Breast epithelium (tissue), 4 donors: ENCODE measurements at regions of chr11 and their contacts with region 1.

Region 1: GRCh38 chr11:1449490-1450243 is 36.9 kb downstream of the MOB2 start:
- DNase-seq: no peak
- H3K4me3 ChIP-seq: no peak overlapping the region
- H3K27ac ChIP-seq: no peak overlapping the region
- H3K4me1 ChIP-seq: peaks cover 0 to 8% of the 10 kb centered on the region in 2 donors
- H3K27me3 ChIP-seq: peaks cover 0 to 61% of the 10 kb centered on the region in 2 donors
- CTCF ChIP-seq: no peak
- POLR2A ChIP-seq: no peak

Region 2: DNA sequence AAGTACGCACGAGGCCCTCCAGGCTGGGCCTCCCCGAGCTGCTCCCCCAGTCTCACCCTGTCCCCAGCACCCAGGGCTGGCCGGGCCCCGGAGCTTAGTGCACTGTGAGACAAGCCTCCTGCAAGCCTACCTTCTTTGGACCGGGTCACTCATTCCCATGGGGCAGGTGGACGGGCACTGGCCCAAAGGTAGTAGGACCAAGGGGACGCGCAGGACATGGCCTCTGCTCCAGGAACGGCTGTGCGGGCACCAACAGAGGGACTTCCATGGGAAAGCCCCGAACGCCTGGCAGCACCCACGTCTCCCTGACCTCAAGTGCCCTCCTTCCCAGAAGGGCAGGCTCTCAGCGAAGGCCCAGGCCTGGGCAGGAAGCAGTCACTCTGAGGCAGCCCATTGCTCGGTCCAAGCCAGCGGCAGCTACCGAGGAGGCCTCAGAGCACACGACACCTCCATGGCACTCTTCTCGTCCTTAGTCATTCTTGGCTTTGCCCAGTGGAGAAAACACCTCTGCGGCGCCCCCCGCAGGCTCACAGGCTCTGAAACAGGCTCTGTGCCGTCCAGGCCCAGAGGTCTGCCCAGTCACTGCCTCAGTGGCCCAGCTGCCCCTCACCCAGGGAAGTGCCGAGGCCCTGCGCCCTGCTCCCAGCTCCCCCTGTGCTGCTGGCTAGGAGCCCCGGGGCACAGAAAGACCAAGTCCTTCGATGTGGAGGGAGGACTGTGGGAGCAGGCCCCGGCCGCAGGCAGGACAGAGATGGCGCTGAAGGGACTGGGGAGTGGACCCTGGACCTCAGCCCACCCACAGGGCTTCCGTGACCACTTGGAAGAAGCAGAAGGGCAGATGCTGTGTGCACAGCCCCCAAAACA is 33.1 kb after region 1 on chr11:
- intact Hi-C with region 1: loop called (anchors 1 kb)
- DNase-seq: no peak
- H3K4me3 ChIP-seq: no peak overlapping the region
- H3K27ac ChIP-seq: peak overlapping the region in 1 of 2 donors; percentile 79
- H3K4me1 ChIP-seq: peaks cover 11 to 18% of the 10 kb centered on the region in 2 donors
- H3K27me3 ChIP-seq: no peaks in the 10 kb centered on the region
- CTCF ChIP-seq: no peak
- POLR2A ChIP-seq: no peak

Region 3: DNA sequence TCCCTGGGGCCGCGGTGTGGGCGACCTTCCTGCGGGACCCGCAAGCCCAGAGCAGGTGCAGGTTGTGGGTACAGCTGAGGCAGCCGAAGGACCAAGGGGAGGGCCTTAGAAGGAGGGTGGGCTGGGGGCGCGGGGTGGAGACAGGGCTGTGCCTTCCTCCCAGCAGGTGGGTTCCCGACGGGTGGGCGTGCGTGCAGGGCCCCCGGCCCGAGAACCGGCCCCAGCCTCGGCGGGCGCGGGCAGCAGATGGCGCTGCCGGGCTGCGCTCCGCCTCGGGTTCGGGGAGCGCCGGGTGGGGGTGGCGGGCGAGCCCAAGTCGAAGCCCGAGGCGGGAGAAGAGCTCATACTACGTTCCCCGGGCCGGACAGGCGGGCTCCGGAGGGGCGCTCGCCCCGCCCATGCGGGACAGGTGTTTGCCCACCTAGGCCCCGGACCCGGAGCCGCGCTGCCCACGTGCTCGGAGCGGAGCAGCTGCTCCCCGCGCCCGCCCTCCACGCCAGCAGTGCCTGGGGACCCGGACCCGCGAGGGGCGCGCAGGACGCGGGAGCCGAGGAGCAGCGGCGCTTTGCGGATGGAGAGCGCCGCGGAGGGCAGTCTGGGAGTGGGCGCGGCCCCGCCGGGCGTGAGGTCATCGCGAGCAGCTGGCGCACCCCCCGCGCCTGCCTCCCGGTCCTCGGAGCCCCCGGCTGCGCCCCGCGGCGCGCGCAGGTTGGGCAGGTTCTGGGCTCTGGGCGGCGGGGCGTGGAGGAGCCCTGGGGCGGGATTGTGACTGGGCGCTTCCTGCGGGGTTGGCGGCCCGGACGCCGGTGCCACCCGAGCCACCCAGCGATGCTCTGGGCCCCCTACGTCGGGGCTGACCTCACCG is 97.1 kb after region 1 on chr11:
- intact Hi-C with region 1: no loop called
- DNase-seq: no peak
- H3K4me3 ChIP-seq: peak overlapping the region; percentile 18 to 63 (median 44)
- H3K27ac ChIP-seq: peak overlapping the region in 1 of 2 donors; percentile 73
- H3K4me1 ChIP-seq: peaks cover 0 to 6% of the 10 kb centered on the region in 2 donors
- H3K27me3 ChIP-seq: peaks cover 3 to 23% of the 10 kb centered on the region in 2 donors
- CTCF ChIP-seq: peak in 2 of 3 donors; percentile 50 to 55
- POLR2A ChIP-seq: no peak

Region 4: DNA sequence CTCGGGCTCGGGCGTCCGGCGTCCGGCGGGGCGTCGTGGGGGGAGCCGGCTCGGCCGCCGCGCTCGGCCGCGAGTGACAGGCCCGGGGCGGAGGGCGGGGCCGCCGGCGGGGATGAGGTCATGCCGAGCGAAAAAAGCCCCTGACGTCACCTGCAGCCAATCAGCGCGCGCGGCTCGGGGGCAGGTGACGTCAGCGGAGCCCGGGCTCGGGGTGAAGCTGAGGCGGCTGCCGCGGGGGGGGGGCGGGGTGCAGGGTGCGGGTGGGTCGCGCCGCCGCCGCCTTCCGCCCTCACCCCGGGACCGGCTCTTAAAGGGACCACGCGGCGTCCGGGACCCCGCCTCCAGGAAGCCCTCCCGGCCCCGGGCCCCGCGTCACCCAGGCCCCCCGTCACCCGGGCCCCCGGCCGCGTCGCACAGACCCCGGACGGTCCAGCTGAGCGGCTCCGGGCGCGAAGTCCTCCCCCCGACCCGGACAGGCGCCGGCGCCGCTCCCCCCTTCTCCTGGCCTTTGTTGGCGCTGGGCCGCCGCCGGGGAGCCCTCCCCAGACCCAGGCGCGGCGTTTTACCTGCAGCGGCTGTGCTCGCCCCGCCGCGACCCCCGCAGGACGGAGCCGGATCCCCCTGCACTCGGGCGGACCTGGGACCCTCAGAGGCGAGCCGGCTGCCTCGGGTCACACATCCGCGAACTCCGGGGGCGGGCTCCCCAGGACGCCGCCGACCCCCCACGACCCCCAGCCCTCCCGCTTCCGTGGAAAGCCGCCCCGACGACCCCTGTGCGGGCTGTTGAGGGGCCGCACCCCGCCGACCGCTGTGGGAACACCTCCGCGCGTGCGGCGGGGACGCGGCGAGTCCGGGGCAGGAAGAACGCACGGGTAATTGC is 122.8 kb after region 1 on chr11 and contains the start of gene DUSP8:
- intact Hi-C with region 1: no loop called
- DNase-seq: peak; percentile 84 to 89
- H3K4me3 ChIP-seq: peak within 1 kb of the TSS; percentile 50 to 77 (median 61)
- H3K27ac ChIP-seq: peak within 1 kb of the TSS; percentile 75 to 92
- H3K4me1 ChIP-seq: peaks cover 0 to 7% of the 10 kb centered on the region in 2 donors
- H3K27me3 ChIP-seq: peaks cover 0 to 15% of the 10 kb centered on the region in 2 donors
- CTCF ChIP-seq: no peak
- POLR2A ChIP-seq: no peak
- total RNA-seq, gene DUSP8: 0.80 to 2.9 (median 1.6) TPM